Activated CD4-positive, alpha-beta T cell treated with anti-CD3 and anti-CD28 coated beads for 36 hours (primary cell): ENCODE measurements at regions of chr15 and their contacts with region 1.

Region 1: GRCh38 chr15:39782441-39783138 is at the start of gene FSIP1:
- DNase-seq: peak; percentile 98
- ATAC-seq: peak; percentile 99
- H3K4me3 Mint-ChIP-seq: peak within 1 kb of the TSS; percentile 74
- H3K27ac Mint-ChIP-seq: peak within 1 kb of the TSS; percentile 84
- H3K4me1 Mint-ChIP-seq: peaks cover 46% of the 10 kb centered on the region
- H3K27me3 Mint-ChIP-seq: no peaks in the 10 kb centered on the region
- total RNA-seq, gene FSIP1: 0.25 to 0.32 TPM

Region 2: DNA sequence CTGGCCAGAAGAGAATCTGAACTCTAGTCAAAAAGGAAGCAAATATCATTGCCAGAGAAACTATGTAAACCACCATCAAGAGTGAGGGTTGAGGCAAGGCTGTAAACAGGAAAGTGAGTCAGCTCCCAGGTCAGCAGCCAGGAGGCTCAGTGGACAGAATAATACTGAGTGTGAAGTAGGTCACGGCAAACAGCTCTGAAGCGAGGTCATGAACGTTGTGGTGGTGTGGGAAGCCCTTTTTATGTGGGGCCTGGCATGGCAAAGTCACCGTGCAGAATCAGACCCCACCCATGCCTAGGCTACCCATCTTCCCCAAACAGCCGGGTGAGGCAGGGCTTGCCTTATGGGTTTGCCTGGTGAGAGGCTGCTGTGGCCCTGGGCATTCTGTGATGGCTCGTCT is 157.8 kb before region 1 on chr15:
- CTCF ChIA-PET with region 1: no interaction called
- POLR2A ChIA-PET with region 1: no interaction called
- intact Hi-C with region 1: loop called in 1 of 2 experiments (anchors 1 kb)
- DNase-seq: peak; percentile 68
- ATAC-seq: peak; percentile 69
- H3K4me3 Mint-ChIP-seq: peak overlapping the region; percentile 18
- H3K27ac Mint-ChIP-seq: peak overlapping the region; percentile 93
- H3K4me1 Mint-ChIP-seq: peaks cover 66% of the 10 kb centered on the region
- H3K27me3 Mint-ChIP-seq: peaks cover 2% of the 10 kb centered on the region

Region 3: GRCh38 chr15:39846108-39846507 is 63.5 kb after region 1 on chr15:
- CTCF ChIA-PET with region 1: no interaction called
- POLR2A ChIA-PET with region 1: no interaction called
- intact Hi-C with region 1: no loop called
- DNase-seq: no peak
- ATAC-seq: no peak
- H3K4me3 Mint-ChIP-seq: no peak overlapping the region
- H3K27ac Mint-ChIP-seq: no peak overlapping the region
- H3K4me1 Mint-ChIP-seq: no peaks in the 10 kb centered on the region
- H3K27me3 Mint-ChIP-seq: peaks cover 12% of the 10 kb centered on the region

Region 4: DNA sequence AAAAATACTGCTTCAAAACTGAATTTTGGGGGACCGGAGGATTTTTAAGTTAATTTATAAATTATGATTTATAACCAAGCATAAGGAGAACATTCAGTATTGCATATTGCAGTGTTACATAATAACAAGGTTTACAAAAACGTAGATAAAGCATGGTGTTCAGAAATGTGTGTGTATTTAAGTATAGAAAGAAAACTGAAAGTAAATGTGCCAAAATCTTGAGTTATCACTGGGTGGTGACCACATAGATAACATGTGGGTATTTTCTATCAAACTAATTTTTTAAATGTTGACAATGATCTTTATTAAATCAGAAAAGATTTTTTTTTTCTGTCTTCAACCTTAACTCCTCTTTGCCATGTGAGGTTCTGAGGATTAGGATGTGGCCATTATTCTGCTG is 183.9 kb after region 1 on chr15:
- CTCF ChIA-PET with region 1: no interaction called
- POLR2A ChIA-PET with region 1: no interaction called
- intact Hi-C with region 1: loop called in 1 of 2 experiments (anchors 2 kb)
- DNase-seq: no peak
- ATAC-seq: no peak
- H3K4me3 Mint-ChIP-seq: no peak overlapping the region
- H3K27ac Mint-ChIP-seq: no peak overlapping the region
- H3K4me1 Mint-ChIP-seq: peaks cover 42% of the 10 kb centered on the region
- H3K27me3 Mint-ChIP-seq: no peaks in the 10 kb centered on the region

Region 5: DNA sequence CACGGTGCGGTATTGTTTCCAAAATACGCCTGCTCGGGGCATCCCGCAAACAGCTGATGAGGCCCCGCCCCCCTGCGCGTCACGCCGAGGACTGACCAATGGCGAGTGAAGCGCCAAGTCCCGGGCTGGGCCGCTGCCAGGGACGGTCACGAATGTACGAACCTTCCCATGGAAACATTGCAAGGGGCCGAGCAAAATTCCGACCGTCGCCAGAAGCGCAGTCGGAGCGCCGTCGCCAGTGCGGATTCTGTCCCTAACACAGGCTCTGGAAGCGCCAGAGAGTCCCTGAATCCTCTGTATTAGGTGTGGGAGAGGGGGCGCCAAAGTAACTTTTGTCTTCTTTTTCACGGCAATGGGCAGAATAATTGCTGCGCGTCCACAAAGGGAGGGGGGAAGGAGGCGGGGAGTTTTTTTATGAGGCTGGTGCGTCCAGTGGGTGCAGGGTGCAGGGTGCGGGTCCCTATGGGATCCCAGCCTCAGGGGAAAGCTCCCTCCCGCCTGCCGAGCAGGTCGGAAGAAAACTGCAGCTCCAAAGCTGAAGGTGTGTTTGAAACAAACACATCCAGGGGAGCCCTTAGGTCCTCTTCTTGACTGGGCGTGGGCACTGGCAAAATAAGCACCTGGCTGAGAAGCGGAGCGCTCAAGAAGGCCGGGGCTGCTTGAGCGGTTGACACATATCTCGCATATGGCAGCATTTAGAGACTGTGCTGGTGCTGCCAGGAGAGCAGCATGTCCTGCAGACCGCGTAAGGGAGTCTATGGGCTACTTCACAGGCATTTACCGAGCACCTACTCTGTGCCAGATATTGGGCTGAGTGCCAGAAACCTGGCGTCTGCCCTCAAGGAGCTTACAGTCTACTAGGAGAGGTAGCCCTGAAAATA is 326.5 kb after region 1 on chr15 and contains the start of gene BMF:
- CTCF ChIA-PET with region 1: no interaction called
- POLR2A ChIA-PET with region 1: no interaction called
- intact Hi-C with region 1: loop called in 1 of 2 experiments (anchors 2 kb)
- DNase-seq: peak; percentile 98
- ATAC-seq: peak; percentile 51
- H3K4me3 Mint-ChIP-seq: peak within 1 kb of the TSS; percentile 78
- H3K27ac Mint-ChIP-seq: peak within 1 kb of the TSS; percentile 76
- H3K4me1 Mint-ChIP-seq: peaks cover 48% of the 10 kb centered on the region
- H3K27me3 Mint-ChIP-seq: peaks cover 2% of the 10 kb centered on the region
- total RNA-seq, gene BMF: 7.6 to 8.4 TPM

Region 6: GRCh38 chr15:40323239-40323952 is 540.8 kb after region 1 on chr15 and contains the start of gene INAFM2:
- CTCF ChIA-PET with region 1: no interaction called
- POLR2A ChIA-PET with region 1: no interaction called
- intact Hi-C with region 1: loop called in 1 of 2 experiments (anchors 1 kb)
- DNase-seq: peak; percentile 92
- ATAC-seq: peak; percentile 87
- H3K4me3 Mint-ChIP-seq: peak within 1 kb of the TSS; percentile 71
- H3K27ac Mint-ChIP-seq: no peak within 1 kb of the TSS
- H3K4me1 Mint-ChIP-seq: peaks cover 25% of the 10 kb centered on the region
- H3K27me3 Mint-ChIP-seq: no peaks in the 10 kb centered on the region
- total RNA-seq, gene INAFM2: 9.9 to 11.2 TPM